Activated CD4-positive, alpha-beta memory T cell treated with anti-CD3 and anti-CD28 coated beads, Interleukin-2, amount 10 ng/mL, durations not matched to agents 7 days and 5 days (primary cell): ENCODE measurements at regions of chr6 and their contacts with region 1.

Region 1: GRCh38 chr6:31366693-31367470 is 9.9 kb upstream of the HLA-B start:
- DNase-seq: peak; percentile 86
- H3K4me3 Mint-ChIP-seq: peak overlapping the region; percentile 45
- H3K27ac Mint-ChIP-seq: no peak overlapping the region
- H3K4me1 Mint-ChIP-seq: peaks cover 13% of the 10 kb centered on the region
- H3K27me3 Mint-ChIP-seq: peaks cover 37% of the 10 kb centered on the region

Region 2: DNA sequence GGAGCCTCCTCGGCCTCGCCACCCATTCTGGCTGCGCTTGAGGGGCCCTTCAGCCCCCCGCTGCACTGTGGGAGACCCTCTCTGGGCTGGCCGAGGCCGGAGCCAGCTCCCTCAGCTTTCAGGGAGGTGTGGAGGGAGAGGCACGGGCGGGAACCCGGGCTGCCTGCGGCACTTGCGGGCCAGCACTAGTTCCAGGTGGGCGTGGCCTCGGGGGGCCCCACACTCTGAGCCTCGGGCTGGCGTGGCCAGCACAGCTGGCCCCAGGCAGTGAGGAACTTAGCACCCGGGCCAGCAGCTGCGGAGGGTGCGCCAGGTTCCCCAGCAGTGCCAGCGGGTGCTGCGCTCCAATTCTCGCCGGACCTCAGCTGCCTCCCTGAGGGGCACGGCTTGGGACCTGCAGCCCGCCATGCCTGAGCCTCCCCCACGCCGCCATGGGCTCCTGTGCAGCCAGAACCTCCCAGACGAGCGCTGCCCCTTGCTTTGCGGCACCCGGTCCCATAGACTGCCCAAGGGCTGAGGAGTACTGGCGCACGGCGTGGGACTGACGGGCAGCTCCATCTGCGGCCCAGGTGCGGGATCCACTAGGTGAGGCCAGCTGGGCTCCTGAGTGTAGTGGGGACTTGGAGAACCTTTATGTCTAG is 350.1 kb before region 1 on chr6:
- CTCF ChIA-PET with region 1: no interaction called
- POLR2A ChIA-PET with region 1: no interaction called
- DNase-seq: no peak
- H3K4me3 Mint-ChIP-seq: no peak overlapping the region
- H3K27ac Mint-ChIP-seq: no peak overlapping the region
- H3K4me1 Mint-ChIP-seq: no peaks in the 10 kb centered on the region
- H3K27me3 Mint-ChIP-seq: peaks cover 24% of the 10 kb centered on the region

Region 3: DNA sequence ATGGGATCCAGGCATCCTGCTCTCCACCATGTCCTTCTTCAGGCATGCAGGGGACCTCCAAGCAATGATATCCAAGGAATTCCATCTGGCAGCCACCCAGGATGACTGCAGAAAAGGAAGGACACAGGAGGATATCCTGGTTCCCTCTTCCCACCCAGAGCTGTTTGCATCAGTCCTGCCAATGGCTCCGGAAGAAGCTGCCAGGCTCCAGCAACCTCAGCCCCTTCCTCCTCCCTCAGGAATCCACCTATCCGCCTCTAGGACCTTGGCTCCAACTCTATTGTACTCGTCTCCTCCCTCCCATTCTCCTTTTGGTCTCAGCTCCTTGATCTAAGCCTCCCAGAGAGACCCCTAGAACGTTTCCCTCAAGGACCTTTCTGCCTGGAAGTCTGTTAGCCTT is 227.3 kb before region 1 on chr6:
- CTCF ChIA-PET with region 1: interaction called, 29 read pairs
- POLR2A ChIA-PET with region 1: interaction called, 3 read pairs
- DNase-seq: no peak
- H3K4me3 Mint-ChIP-seq: no peak overlapping the region
- H3K27ac Mint-ChIP-seq: no peak overlapping the region
- H3K4me1 Mint-ChIP-seq: peaks cover 8% of the 10 kb centered on the region
- H3K27me3 Mint-ChIP-seq: no peaks in the 10 kb centered on the region

Region 4: GRCh38 chr6:31158140-31158862 is 208.6 kb before region 1 on chr6 and contains the start of gene TCF19:
- CTCF ChIA-PET with region 1: interaction called, 19 read pairs
- POLR2A ChIA-PET with region 1: no interaction called
- DNase-seq: peak; percentile 100
- H3K4me3 Mint-ChIP-seq: peak within 1 kb of the TSS; percentile 79
- H3K27ac Mint-ChIP-seq: peak within 1 kb of the TSS; percentile 62
- H3K4me1 Mint-ChIP-seq: peaks cover 52% of the 10 kb centered on the region
- H3K27me3 Mint-ChIP-seq: no peaks in the 10 kb centered on the region
- total RNA-seq, gene TCF19: 78.9 to 80.7 TPM

Region 5: DNA sequence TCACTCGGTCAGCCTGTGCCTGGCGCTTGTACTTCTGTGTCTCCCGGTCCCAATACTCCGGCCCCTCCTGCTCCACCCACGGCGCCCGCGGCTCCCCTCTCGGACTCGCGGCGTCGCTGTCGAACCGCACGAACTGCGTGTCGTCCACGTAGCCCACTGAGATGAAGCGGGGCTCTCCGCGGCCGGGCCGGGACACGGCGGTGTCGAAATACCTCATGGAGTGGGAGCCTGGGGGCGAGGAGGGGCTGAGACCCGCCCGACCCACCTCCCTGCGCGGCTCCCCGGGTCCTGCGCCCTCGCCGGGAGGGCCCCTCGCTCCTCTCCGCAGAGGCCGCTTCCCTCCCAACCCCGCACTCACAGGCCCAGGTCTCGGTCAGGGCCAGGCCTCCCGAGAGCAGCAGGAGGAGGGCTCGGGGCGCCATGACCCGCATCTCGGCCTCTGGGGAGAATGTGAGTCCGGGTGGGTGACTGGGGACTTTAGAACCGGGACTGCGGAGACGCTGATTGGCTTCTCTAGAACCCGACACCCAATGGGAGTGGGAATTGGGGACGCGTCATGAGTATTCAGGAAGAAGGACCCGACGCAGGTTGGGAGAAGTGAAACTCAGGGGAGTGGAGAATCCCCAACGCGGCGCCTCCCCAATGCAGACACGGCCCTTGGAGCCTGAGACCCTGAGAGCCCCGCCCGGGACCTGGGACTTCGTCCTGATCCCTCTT is 95.1 kb before region 1 on chr6 and contains the start of gene HLA-C:
- CTCF ChIA-PET with region 1: interaction called, 4 read pairs
- POLR2A ChIA-PET with region 1: interaction called, 10 read pairs
- DNase-seq: peak; percentile 94
- H3K4me3 Mint-ChIP-seq: peak within 1 kb of the TSS; percentile 96
- H3K27ac Mint-ChIP-seq: peak within 1 kb of the TSS; percentile 99
- H3K4me1 Mint-ChIP-seq: peaks cover 56% of the 10 kb centered on the region
- H3K27me3 Mint-ChIP-seq: peaks cover 14% of the 10 kb centered on the region
- total RNA-seq, gene HLA-C: 1,690 to 1,696 TPM

Region 6: DNA sequence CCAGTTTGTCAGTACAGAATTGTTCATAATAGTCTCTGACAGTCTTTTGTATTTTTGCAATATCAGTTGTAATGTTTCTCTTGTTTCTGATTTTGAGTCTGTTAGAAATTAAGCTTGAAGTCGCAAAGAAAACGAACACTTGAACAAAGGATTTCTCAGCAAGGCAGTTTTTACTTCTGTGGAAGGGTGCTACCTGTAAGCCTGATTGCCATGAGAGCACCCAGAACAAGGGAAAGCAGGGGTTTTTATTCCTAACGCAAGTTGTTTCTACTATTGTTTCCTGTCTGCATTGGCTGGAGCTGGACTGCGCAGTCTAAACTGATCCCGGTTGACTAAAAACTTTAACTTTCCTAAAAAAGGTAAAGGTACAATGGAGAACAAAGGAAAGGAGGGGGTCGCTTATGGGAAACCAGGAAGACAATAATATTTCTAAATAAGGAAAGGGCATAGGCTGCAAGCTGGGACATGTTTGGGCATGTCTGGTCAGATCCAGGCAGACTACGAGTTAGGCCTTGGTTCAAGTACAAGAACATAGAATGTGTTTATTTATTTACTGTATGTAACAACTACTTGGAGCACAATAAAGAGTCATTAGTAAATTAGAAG is 38.4 kb before region 1 on chr6:
- CTCF ChIA-PET with region 1: no interaction called
- POLR2A ChIA-PET with region 1: no interaction called
- DNase-seq: no peak
- H3K4me3 Mint-ChIP-seq: no peak overlapping the region
- H3K27ac Mint-ChIP-seq: no peak overlapping the region
- H3K4me1 Mint-ChIP-seq: peaks cover 13% of the 10 kb centered on the region
- H3K27me3 Mint-ChIP-seq: peaks cover 21% of the 10 kb centered on the region

Region 7: GRCh38 chr6:31379850-31380249 is 13.0 kb after region 1 on chr6:
- CTCF ChIA-PET with region 1: interaction called, 19 read pairs
- POLR2A ChIA-PET with region 1: no interaction called
- DNase-seq: no peak
- H3K4me3 Mint-ChIP-seq: no peak overlapping the region
- H3K27ac Mint-ChIP-seq: no peak overlapping the region
- H3K4me1 Mint-ChIP-seq: peaks cover 1% of the 10 kb centered on the region
- H3K27me3 Mint-ChIP-seq: peaks cover 43% of the 10 kb centered on the region

Region 8: GRCh38 chr6:31453259-31453658 is 86.4 kb after region 1 on chr6:
- CTCF ChIA-PET with region 1: no interaction called
- POLR2A ChIA-PET with region 1: no interaction called
- DNase-seq: no peak
- H3K4me3 Mint-ChIP-seq: no peak overlapping the region
- H3K27ac Mint-ChIP-seq: no peak overlapping the region
- H3K4me1 Mint-ChIP-seq: no peaks in the 10 kb centered on the region
- H3K27me3 Mint-ChIP-seq: peaks cover 46% of the 10 kb centered on the region